ENCODE measurements at regions of chr2 and their contacts with region 1.

Region 1: GRCh38 chr2:135657806-135658582 is 83.7 kb upstream of the UBXN4 start:
- DNase-seq: peak; percentile 87
- ATAC-seq: peak; percentile 93
- H3K4me3 Mint-ChIP-seq: peak overlapping the region; percentile 76
- H3K27ac Mint-ChIP-seq: peak overlapping the region; percentile 97
- H3K4me1 Mint-ChIP-seq: peaks cover 35% of the 10 kb centered on the region
- H3K27me3 Mint-ChIP-seq: no peaks in the 10 kb centered on the region

Region 2: GRCh38 chr2:135531231-135532228 is 126.5 kb before region 1 on chr2 and contains the start of gene R3HDM1:
- CTCF ChIA-PET with region 1: interaction called, 4 read pairs
- POLR2A ChIA-PET with region 1: interaction called, 10 read pairs
- DNase-seq: peak; percentile 98
- ATAC-seq: peak; percentile 87
- H3K4me3 Mint-ChIP-seq: no peak within 1 kb of the TSS
- H3K27ac Mint-ChIP-seq: no peak within 1 kb of the TSS
- H3K4me1 Mint-ChIP-seq: peaks cover 37% of the 10 kb centered on the region
- H3K27me3 Mint-ChIP-seq: no peaks in the 10 kb centered on the region
- total RNA-seq, gene R3HDM1: 51.9 to 53.9 TPM

Region 3: GRCh38 chr2:135882415-135882814 is 224.4 kb after region 1 on chr2:
- CTCF ChIA-PET with region 1: no interaction called
- POLR2A ChIA-PET with region 1: no interaction called
- DNase-seq: no peak
- ATAC-seq: no peak
- H3K4me3 Mint-ChIP-seq: no peak overlapping the region
- H3K27ac Mint-ChIP-seq: no peak overlapping the region
- H3K4me1 Mint-ChIP-seq: peaks cover 5% of the 10 kb centered on the region
- H3K27me3 Mint-ChIP-seq: peaks cover 18% of the 10 kb centered on the region

Region 4: DNA sequence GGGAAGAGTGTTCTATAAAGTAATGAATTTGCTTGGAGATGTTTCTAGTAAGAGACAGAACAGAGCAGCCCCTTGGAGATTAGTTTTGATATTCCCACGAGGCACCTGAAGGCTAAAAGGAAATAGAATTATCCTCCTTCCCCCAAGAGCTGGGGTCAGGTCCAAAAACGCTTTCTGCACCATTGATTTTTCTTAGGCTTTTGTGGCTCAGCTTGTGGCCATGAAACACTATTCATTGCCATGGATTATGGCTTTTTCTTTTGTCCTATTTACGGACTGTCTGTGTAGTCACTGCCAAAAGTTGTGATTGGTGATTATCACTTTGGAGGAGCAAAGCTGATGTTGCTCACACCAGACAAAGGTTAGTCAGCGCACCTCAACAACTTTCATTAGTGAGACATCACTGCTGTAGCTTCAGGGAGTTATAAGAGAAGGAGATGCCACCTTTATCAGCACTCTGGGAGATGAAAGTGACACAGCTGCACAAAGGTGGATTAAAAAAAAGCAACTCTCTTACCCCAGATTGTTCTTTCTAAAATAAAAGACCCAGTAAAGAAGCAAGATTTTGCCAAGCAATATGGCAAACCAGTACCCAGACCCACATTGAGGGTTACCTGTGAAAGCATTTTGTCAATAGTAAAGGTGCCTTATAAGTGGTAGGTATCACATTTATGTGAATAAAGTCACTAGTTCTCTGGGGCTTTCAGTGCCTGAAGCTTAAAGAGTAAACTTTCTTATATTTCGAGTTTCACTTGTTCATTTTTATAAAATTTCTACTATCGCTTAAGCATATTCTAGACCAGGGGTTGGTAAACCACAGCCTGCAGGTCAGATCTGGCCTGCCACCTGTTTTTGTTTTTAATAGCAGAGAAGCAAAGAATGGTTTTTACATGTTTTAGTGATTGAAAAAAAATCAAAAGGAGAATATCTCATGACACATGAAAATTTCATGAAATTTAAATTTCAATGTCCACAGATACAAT is 449.3 kb after region 1 on chr2:
- CTCF ChIA-PET with region 1: no interaction called
- POLR2A ChIA-PET with region 1: no interaction called
- DNase-seq: no peak
- ATAC-seq: no peak
- H3K4me3 Mint-ChIP-seq: no peak overlapping the region
- H3K27ac Mint-ChIP-seq: no peak overlapping the region
- H3K4me1 Mint-ChIP-seq: peaks cover 14% of the 10 kb centered on the region
- H3K27me3 Mint-ChIP-seq: no peaks in the 10 kb centered on the region